CD8-positive, alpha-beta T cell (primary cell): ENCODE measurements at regions of chr7 and their contacts with region 1.

Region 1: DNA sequence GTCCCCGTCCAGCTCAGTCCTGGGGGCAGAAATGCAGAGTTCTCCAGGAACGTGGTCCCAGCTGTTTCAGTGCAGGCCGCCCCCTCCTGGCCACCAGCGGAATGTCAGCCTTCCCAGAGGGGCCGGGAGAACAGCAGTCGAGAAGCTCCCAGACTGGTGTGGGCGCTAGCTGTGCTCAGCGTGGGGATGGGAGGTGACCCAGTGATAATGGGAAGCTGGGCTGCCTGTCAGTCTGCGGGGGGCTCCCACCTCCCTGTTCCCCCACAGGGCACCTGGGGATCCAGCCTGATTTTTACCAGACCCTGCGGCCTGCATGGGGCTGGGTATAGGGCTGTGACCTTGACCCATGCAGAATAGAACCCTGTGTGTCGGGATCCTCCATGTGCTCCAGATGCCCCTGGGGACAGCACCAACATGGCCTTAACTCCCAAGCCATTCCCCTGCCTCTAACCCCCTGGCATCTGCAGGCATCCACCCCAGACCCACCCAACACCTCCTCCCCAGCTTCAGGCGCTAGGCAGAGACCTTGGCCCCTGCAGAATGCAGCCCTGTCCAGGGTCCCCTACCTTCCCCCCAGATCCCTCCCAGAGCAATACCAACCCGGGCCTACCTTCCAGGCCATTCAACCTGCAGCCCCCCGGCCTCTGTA is 946 bp upstream of the ELN start:
- DNase-seq: peak; percentile 29 to 76 (median 62)
- ATAC-seq: peak; percentile 71
- H3K4me3 ChIP-seq: no peak overlapping the region
- H3K4me3 Mint-ChIP-seq: no peak overlapping the region
- H3K27ac ChIP-seq: no peak overlapping the region
- H3K27ac Mint-ChIP-seq: no peak overlapping the region
- H3K4me1 ChIP-seq: peaks cover 3% of the 10 kb centered on the region
- H3K4me1 Mint-ChIP-seq: peaks cover 9% of the 10 kb centered on the region
- H3K27me3 ChIP-seq: peaks cover 0 to 10% of the 10 kb centered on the region in 2 experiments
- H3K27me3 Mint-ChIP-seq: peaks cover 37% of the 10 kb centered on the region
- CTCF ChIP-seq: peak; percentile 93

Region 2: DNA sequence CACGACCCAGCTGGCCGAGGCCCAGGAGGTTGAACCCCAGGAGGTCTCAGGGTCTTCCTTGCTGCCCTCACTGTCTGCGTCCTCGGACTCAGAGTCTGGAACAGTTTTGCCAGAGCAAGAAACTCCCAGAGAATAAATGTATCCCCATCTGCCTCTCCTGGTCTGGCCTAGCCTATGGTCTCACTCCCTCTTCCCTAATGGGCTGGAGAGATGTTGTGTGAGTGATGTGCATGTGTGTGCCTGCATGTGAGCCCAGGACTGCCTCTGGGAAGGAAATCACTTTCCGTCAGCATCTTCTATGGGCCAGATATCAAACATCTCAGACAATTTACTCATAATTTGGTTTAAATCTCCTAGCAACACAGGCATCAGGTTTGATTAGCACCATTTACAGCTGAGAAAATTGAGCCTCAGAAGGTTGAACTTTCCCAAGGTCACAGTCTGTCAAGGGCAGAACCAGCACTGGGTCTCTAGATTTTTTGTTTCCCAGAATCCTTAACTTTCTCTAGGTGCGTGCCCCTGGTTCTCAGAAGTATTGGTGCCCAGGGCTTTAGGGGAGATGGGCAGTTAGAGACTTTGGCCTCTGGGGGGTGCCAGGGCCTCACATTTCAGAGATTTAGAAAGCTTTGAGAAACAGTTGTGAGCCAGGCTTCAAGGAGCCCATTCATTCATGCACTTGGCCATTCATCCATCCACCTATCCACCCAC is 161.1 kb before region 1 on chr7:
- CTCF ChIA-PET with region 1: interaction called, 4 read pairs
- POLR2A ChIA-PET with region 1: no interaction called
- intact Hi-C with region 1: loop called in 1 of 2 experiments (anchors 2 kb)
- DNase-seq: peak in 1 of 9 experiments; percentile 18
- ATAC-seq: no peak
- H3K4me3 ChIP-seq: no peak overlapping the region
- H3K4me3 Mint-ChIP-seq: no peak overlapping the region
- H3K27ac ChIP-seq: no peak overlapping the region
- H3K27ac Mint-ChIP-seq: no peak overlapping the region
- H3K4me1 ChIP-seq: no peaks in the 10 kb centered on the region
- H3K4me1 Mint-ChIP-seq: no peaks in the 10 kb centered on the region
- H3K27me3 ChIP-seq: no peaks in the 10 kb centered on the region
- H3K27me3 Mint-ChIP-seq: no peaks in the 10 kb centered on the region
- CTCF ChIP-seq: no peak

Region 3: GRCh38 chr7:74013519-74014267 is 13.3 kb before region 1 on chr7:
- CTCF ChIA-PET with region 1: interaction called, 32 read pairs
- POLR2A ChIA-PET with region 1: no interaction called
- intact Hi-C with region 1: no loop called
- DNase-seq: no peak
- ATAC-seq: no peak
- H3K4me3 ChIP-seq: no peak overlapping the region
- H3K4me3 Mint-ChIP-seq: no peak overlapping the region
- H3K27ac ChIP-seq: no peak overlapping the region
- H3K27ac Mint-ChIP-seq: no peak overlapping the region
- H3K4me1 ChIP-seq: no peaks in the 10 kb centered on the region
- H3K4me1 Mint-ChIP-seq: no peaks in the 10 kb centered on the region
- H3K27me3 ChIP-seq: no peaks in the 10 kb centered on the region
- H3K27me3 Mint-ChIP-seq: peaks cover 6% of the 10 kb centered on the region
- CTCF ChIP-seq: no peak

Region 4: GRCh38 chr7:74039346-74039745 is 12.3 kb after region 1 on chr7:
- CTCF ChIA-PET with region 1: interaction called, 39 read pairs
- POLR2A ChIA-PET with region 1: no interaction called
- intact Hi-C with region 1: no loop called
- DNase-seq: no peak
- ATAC-seq: no peak
- H3K4me3 ChIP-seq: no peak overlapping the region
- H3K4me3 Mint-ChIP-seq: no peak overlapping the region
- H3K27ac ChIP-seq: no peak overlapping the region
- H3K27ac Mint-ChIP-seq: no peak overlapping the region
- H3K4me1 ChIP-seq: no peaks in the 10 kb centered on the region
- H3K4me1 Mint-ChIP-seq: no peaks in the 10 kb centered on the region
- H3K27me3 ChIP-seq: no peaks in the 10 kb centered on the region
- H3K27me3 Mint-ChIP-seq: no peaks in the 10 kb centered on the region
- CTCF ChIP-seq: no peak

Region 5: DNA sequence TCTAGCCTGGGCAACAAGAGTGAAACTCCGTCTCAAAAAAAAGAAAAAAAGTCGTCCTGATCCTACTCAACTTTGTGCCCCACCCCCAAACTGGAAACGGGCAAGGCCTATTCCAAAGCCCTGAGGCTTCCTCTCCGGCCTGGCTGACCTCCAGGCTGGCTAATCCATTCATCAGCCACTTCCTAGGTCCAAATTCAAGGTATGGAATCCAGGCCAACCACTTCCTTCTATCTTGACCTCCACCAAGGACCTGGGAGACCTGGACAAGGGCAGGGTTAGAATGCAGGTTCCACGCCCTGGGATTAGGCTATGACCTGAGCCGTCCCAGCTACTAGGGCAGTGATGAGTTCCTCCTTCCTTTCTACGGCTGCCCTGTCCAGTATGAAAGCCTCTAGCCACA is 126.7 kb after region 1 on chr7:
- CTCF ChIA-PET with region 1: no interaction called
- POLR2A ChIA-PET with region 1: no interaction called
- intact Hi-C with region 1: no loop called
- DNase-seq: no peak
- ATAC-seq: no peak
- H3K4me3 ChIP-seq: no peak overlapping the region
- H3K4me3 Mint-ChIP-seq: no peak overlapping the region
- H3K27ac ChIP-seq: no peak overlapping the region
- H3K27ac Mint-ChIP-seq: no peak overlapping the region
- H3K4me1 ChIP-seq: no peaks in the 10 kb centered on the region
- H3K4me1 Mint-ChIP-seq: no peaks in the 10 kb centered on the region
- H3K27me3 ChIP-seq: no peaks in the 10 kb centered on the region
- H3K27me3 Mint-ChIP-seq: no peaks in the 10 kb centered on the region
- CTCF ChIP-seq: no peak